ENCODE measurements at regions of chr18 and their contacts with region 1.

Region 1: DNA sequence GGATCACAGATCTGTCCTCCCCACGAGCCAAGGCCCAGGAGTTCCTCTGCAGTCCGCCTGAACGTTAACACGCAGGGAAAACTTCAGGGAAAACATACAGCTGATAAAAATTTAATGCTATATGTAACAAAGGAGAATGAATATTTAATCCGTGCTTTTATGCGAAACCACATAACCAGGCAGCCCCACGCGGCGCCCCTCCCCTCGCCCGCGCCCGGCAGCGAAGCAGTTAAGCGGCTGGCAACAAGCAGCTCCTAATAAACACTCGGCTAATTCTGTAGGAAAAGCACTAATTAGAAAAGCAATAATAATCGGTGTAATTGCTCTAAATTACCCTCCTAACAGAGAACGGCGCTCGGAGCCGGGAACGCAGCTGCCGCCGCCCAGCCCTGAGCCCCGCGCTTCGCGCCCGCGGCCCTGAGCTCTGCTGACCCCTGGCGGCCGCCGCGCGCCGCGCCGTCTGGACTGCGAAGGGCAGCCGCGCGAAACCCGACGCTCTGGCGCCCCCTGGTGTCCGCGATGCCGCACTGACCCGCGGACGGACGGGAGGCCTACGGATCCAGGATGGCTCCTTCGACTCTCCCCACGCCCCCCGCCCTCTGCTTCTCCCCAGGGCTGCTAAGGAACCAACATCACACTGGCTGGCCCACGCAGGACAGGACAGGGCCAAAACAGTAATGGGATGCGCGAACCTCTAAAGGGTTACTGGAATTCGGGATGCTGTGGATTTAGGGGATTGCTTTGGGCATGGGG is 181.4 kb downstream of the SMAD2 start:
- DNase-seq: peak; percentile 59 to 98 (median 84)
- ATAC-seq: peak; percentile 97 to 100 (median 99)
- H3K4me3 ChIP-seq: peak overlapping the region in 1 of 4 donors; percentile 34
- H3K27ac ChIP-seq: no peak overlapping the region
- H3K4me1 ChIP-seq: no peaks in the 10 kb centered on the region
- H3K27me3 ChIP-seq: peaks cover 0 to 10% (median 0%) of the 10 kb centered on the region in 4 donors
- CTCF ChIP-seq: peak; percentile 100

Region 2: GRCh38 chr18:47215554-47216138 is 533.4 kb before region 1 on chr18:
- intact Hi-C with region 1: loop called in 2 of 3 experiments (anchors 5 kb)
- DNase-seq: peak in 1 of 6 donors; percentile 23
- ATAC-seq: peak in 3 of 4 donors; percentile 68 to 81 (median 76)
- H3K4me3 ChIP-seq: no peak overlapping the region
- H3K27ac ChIP-seq: no peak overlapping the region
- H3K4me1 ChIP-seq: no peaks in the 10 kb centered on the region
- H3K27me3 ChIP-seq: no peaks in the 10 kb centered on the region
- CTCF ChIP-seq: peak in 3 of 4 donors; percentile 33 to 38 (median 34)

Region 3: GRCh38 chr18:47397671-47398319 is 351.2 kb before region 1 on chr18:
- intact Hi-C with region 1: loop called in 1 of 3 experiments (anchors 10 kb)
- DNase-seq: no peak
- ATAC-seq: peak in 2 of 4 donors; percentile 35 to 46
- H3K4me3 ChIP-seq: no peak overlapping the region
- H3K27ac ChIP-seq: no peak overlapping the region
- H3K4me1 ChIP-seq: no peaks in the 10 kb centered on the region
- H3K27me3 ChIP-seq: no peaks in the 10 kb centered on the region
- CTCF ChIP-seq: no peak